ENCODE measurements at regions of chr1 and their contacts with region 1.

Region 1: DNA sequence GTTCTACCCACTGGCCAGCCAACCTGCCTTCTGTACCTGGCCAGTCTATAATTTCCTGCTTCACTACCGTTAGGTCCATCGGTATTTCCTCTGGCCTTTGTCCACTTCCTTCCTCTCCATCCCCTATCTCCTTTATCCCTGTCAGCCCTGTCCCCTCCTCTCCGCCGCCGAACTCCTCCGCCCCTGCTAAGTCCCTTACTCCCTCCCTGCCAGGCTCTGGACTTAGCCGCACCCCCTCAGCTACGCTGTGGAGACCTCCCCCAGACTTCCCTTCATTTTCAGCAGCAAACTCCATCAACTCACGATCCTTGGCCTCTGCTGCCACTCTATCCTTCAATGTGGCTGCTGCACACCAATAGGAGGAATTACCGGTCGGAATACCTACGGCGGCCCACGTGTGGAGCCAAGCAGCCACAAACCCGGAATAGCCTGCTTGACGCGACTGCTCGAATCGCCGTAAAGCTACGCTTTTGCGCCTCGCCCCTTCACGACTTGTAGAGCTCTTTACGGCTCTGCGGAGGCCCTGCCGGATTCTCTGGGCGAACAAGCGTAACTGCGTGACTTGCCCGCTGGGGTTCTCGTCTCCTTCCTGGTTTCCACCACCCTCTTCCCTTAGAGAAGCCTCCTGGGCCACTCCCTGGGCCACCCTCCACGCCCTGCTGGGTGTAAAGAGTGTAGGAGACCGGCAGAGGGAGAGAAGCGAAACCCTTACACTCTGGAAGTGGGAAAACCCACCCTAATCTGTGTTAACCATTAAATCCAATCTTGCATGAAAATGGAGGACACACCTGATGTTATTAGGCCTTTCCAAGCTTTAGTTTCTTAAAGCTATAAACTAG is at the start of gene ZNHIT6:
- DNase-seq: peak; percentile 99
- H3K4me3 ChIP-seq: peak within 1 kb of the TSS; percentile 87
- H3K27ac ChIP-seq: peak within 1 kb of the TSS; percentile 66
- H3K4me1 ChIP-seq: peaks cover 18% of the 10 kb centered on the region
- H3K27me3 ChIP-seq: no peaks in the 10 kb centered on the region
- total RNA-seq, gene ZNHIT6: 10.4 and 16.6 TPM in 2 replicates

Region 2: DNA sequence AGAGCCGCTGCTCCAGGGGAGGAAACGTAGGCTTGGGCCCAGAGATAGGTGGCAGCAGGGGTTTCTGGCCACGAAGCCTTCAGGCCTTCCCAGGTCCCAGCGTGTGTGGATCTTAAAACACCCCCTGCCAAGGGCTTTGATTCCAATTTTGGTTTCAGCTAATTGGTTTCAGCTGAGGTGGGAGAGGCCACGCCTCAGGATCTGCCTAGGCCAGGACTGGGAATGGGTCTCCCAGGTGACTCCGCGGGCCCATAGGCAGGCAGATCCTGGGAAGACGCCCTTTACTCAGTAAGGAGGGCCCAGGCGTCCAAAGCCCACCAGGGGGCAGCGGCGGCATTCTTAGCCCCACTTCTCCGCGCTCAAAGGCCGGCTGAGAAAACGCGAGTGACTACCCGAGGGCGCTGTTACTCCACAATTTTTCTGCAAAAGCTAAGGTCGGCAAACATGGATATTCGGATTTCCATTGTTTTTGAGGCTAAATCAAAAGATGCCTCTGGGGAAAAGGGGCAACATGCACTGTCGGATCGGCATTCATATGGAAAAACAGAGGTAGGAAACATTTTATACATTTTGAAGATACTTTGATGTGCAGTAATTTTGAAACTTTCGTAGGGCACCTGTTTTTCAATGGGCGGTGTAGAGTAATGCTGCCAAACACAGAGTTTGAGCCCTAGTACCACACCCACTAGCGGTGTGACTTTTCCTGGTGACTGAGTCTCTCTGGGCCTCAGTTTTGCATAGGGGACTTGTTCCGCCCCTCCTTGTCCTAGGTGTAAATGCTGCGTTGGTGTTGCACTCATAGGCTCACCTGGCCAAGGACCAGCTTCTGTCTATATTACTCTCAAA is 400.0 kb before region 1 on chr1:
- in situ Hi-C with region 1: loop called (anchors 10 kb)
- DNase-seq: peak; percentile 95
- H3K4me3 ChIP-seq: no peak overlapping the region
- H3K27ac ChIP-seq: peak overlapping the region; percentile 12; the same call in 1 of the 2 replicates
- H3K4me1 ChIP-seq: peaks cover 39% of the 10 kb centered on the region
- H3K27me3 ChIP-seq: no peaks in the 10 kb centered on the region

Region 3: DNA sequence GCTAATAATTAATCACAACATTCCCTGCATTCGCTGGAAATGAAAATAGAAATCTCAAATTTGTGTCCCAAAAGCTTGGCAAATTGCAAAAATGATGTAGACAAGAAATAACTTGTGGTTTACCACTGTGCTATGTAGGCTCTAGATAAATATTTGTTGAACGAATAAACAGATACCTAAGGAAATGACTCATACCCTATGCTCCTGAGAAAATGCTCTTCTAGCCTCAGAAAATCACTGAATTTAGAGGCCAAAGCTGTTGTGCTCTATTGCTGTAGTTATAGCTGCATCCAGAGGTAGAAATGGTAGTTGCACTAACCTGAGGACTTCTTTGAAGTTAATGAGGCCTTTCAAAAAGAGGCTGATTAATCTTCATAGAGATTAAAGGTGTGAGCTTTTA is 142.0 kb after region 1 on chr1:
- in situ Hi-C with region 1: no loop called
- DNase-seq: peak; percentile 94
- H3K4me3 ChIP-seq: peak overlapping the region; percentile 46
- H3K27ac ChIP-seq: peak overlapping the region; percentile 49
- H3K4me1 ChIP-seq: peaks cover 15% of the 10 kb centered on the region
- H3K27me3 ChIP-seq: no peaks in the 10 kb centered on the region

Region 4: DNA sequence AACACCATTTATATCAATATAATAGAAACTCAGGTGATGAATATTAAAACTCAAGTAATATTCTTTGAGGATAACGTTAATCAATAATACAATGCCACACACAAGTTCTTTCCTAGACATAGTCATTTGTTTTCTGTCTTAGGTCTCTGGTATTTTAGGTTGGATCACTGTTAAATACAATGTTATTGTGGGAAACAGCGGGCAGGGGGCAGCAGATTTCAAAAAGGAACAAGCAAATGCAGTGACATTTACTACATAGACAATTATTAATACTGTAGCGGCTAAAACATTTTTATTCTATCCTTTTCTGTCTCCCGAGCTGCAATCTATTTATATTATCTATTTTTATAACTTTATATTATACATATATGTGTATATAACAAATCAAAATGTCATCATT is 186.4 kb after region 1 on chr1:
- in situ Hi-C with region 1: loop called (anchors 25 kb)
- DNase-seq: peak; percentile 62
- H3K4me3 ChIP-seq: no peak overlapping the region
- H3K27ac ChIP-seq: no peak overlapping the region
- H3K4me1 ChIP-seq: no peaks in the 10 kb centered on the region
- H3K27me3 ChIP-seq: no peaks in the 10 kb centered on the region